Tibial artery (tissue), 4 donors: ENCODE measurements at regions of chr16 and their contacts with region 1.

Region 1: GRCh38 chr16:81600901-81601428 is 156.4 kb downstream of the CMIP start:
- DNase-seq: peak; percentile 35 to 77
- H3K4me3 ChIP-seq: no peak overlapping the region
- H3K27ac ChIP-seq: peak overlapping the region; percentile 33 to 57
- H3K4me1 ChIP-seq: peaks cover 0 to 30% (median 26%) of the 10 kb centered on the region in 4 donors
- H3K27me3 ChIP-seq: peaks cover 0 to 3% of the 10 kb centered on the region in 2 donors
- CTCF ChIP-seq: no peak

Region 2: DNA sequence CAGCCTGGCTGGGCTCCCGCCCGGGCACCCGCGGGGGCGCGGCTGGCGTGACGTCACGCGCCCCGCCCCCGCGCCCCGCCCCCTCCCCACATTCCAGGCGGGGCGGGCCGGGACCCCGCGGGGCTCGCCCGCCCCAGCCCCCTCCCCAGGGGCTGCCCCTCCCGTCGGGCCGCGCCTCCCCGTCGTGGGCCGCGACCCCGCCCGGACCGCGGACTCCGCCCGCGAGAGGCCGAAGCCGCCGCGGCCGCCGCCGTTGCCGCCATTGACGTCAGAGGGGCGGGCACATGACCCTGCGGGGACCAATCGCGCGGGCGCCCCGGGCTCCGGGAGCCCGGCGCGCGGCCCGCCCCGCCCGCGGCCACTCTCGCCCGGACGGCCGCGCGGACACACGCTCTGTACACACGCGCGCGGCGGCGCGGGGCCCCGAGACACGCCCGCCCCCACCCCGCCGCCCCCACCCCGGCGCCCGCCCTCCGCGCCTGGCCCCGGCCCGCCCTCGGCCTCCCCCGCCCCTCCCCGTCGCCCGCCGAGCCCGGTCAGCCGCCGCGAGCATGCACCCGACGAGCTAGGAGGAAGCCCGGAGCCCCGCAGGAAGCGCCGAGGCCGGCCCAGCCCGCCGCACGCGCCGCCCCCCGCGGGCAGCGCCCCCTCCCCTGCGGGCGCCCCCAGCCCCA is 156.4 kb before region 1 on chr16 and contains the start of gene CMIP:
- intact Hi-C with region 1: loop called (anchors 10 kb)
- DNase-seq: peak; percentile 73 to 89
- H3K4me3 ChIP-seq: peak within 1 kb of the TSS; percentile 62 to 73
- H3K27ac ChIP-seq: peak within 1 kb of the TSS; percentile 60 to 76
- H3K4me1 ChIP-seq: peaks cover 0 to 44% (median 18%) of the 10 kb centered on the region in 4 donors
- H3K27me3 ChIP-seq: no peaks in the 10 kb centered on the region
- CTCF ChIP-seq: no peak